ENCODE measurements at regions of chr15 and their contacts with region 1.

Region 1: GRCh38 chr15:66951531-66952320 is 113.7 kb upstream of the SMAD3 start:
- DNase-seq: peak; percentile 38 to 55 (median 52)
- H3K4me3 ChIP-seq: no peak overlapping the region
- H3K4me3 Mint-ChIP-seq: no peak overlapping the region
- H3K27ac ChIP-seq: no peak overlapping the region
- H3K27ac Mint-ChIP-seq: peak overlapping the region in 2 of 7 donors; percentile 4 to 27
- H3K4me1 ChIP-seq: peaks cover 9 to 18% of the 10 kb centered on the region in 2 donors
- H3K4me1 Mint-ChIP-seq: peaks cover 26% of the 10 kb centered on the region
- H3K27me3 ChIP-seq: no peaks in the 10 kb centered on the region
- H3K27me3 Mint-ChIP-seq: peaks cover 0 to 6% (median 0%) of the 10 kb centered on the region in 3 donors
- CTCF ChIP-seq: no peak

Region 2: DNA sequence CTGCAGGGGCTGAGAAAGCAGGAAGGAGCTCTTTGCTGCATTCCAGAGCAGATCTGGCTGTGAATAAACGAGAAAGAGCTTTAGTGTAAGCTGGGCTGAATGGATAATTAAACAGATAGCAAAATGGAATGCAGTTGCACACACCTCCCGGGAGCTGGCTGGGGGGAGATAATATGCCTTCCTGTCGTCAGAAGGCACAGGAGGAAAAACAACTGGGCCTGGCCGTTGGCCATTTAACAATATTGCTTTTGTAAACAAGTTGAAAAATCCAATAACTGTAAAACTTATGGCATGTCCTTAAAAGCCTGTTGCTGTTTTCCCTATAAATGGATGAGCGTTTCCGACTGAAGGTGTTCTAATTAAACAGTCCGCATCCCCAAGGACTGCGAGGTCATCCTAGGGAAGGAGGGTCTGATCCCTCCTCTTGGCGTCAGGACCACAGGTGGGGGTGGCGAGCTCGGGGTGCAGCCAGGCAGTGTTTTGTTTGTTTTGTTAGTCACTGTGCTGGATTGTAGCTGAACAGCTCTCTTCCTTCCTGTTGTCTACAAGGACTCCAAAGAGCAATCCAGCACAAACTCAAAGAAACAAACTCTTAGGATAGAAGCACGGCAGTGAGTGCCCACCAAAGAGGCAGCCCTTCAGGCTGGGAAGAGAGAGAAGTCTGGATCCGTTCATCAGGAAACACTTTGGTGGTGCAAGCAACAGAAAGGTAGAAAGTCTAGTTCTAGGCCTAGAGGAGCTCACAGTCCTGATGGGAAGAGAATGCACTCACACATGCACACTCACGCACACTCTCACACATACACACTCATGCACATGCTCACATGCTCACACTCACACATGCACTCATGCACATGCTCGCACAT is 19.7 kb before region 1 on chr15:
- intact Hi-C with region 1: no loop called
- DNase-seq: no peak
- H3K4me3 ChIP-seq: no peak overlapping the region
- H3K4me3 Mint-ChIP-seq: no peak overlapping the region
- H3K27ac ChIP-seq: no peak overlapping the region
- H3K27ac Mint-ChIP-seq: no peak overlapping the region
- H3K4me1 ChIP-seq: peaks cover 0 to 5% of the 10 kb centered on the region in 2 donors
- H3K4me1 Mint-ChIP-seq: peaks cover 14% of the 10 kb centered on the region
- H3K27me3 ChIP-seq: no peaks in the 10 kb centered on the region
- H3K27me3 Mint-ChIP-seq: peaks cover 0 to 2% (median 0%) of the 10 kb centered on the region in 3 donors
- CTCF ChIP-seq: no peak

Region 3: DNA sequence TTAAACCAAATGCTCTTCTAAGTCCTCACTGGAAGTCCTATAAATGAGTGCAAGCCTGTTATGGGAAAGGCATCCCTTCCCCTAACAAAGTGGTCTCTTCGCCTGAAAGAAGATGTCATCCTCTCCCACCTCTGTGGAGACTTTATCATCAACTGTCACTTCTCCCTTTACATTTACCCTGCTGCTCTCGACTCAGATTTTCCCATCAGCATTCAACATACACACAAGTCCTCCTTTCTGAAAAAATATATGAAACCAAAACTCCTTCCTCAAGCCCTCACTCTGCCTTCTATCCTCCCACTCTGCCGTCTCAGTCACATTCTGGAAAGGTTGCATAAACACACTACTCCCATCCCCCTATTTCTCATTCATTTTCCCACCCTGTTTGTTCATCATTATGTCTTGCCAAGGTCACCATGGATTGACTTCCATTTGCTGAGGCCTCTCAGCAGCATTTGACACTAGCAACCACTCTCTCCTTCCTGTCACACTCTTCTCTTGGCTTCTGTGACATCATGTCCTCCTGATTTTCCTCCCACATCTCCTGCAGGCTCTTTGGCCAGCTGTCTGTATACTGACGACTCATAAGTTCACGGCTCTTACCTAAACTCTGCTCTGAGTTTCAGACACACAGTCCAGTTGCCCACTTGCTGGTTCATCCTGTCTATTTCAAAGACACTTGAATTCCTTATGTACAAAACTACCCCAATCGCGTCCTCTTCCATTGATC is 43.4 kb after region 1 on chr15:
- intact Hi-C with region 1: loop called in 1 of 2 experiments (anchors 5 kb)
- DNase-seq: no peak
- H3K4me3 ChIP-seq: no peak overlapping the region
- H3K4me3 Mint-ChIP-seq: no peak overlapping the region
- H3K27ac ChIP-seq: no peak overlapping the region
- H3K27ac Mint-ChIP-seq: no peak overlapping the region
- H3K4me1 ChIP-seq: peaks cover 0 to 4% of the 10 kb centered on the region in 2 donors
- H3K4me1 Mint-ChIP-seq: peaks cover 13% of the 10 kb centered on the region
- H3K27me3 ChIP-seq: no peaks in the 10 kb centered on the region
- H3K27me3 Mint-ChIP-seq: peaks cover 0 to 4% (median 0%) of the 10 kb centered on the region in 3 donors
- CTCF ChIP-seq: no peak

Region 4: GRCh38 chr15:67024314-67024997 is 72.7 kb after region 1 on chr15:
- intact Hi-C with region 1: no loop called
- DNase-seq: peak; percentile 93 to 95 (median 95)
- H3K4me3 ChIP-seq: peak overlapping the region in 2 of 3 experiments; percentile 11 to 54
- H3K4me3 Mint-ChIP-seq: peak overlapping the region; percentile 47 to 70
- H3K27ac ChIP-seq: peak overlapping the region; percentile 84 to 97
- H3K27ac Mint-ChIP-seq: peak overlapping the region; percentile 94 to 99 (median 99)
- H3K4me1 ChIP-seq: peaks cover 74 to 81% of the 10 kb centered on the region in 2 donors
- H3K4me1 Mint-ChIP-seq: peaks cover 77% of the 10 kb centered on the region
- H3K27me3 ChIP-seq: no peaks in the 10 kb centered on the region
- H3K27me3 Mint-ChIP-seq: peaks cover 0 to 2% (median 0%) of the 10 kb centered on the region in 3 donors
- CTCF ChIP-seq: no peak

Region 5: DNA sequence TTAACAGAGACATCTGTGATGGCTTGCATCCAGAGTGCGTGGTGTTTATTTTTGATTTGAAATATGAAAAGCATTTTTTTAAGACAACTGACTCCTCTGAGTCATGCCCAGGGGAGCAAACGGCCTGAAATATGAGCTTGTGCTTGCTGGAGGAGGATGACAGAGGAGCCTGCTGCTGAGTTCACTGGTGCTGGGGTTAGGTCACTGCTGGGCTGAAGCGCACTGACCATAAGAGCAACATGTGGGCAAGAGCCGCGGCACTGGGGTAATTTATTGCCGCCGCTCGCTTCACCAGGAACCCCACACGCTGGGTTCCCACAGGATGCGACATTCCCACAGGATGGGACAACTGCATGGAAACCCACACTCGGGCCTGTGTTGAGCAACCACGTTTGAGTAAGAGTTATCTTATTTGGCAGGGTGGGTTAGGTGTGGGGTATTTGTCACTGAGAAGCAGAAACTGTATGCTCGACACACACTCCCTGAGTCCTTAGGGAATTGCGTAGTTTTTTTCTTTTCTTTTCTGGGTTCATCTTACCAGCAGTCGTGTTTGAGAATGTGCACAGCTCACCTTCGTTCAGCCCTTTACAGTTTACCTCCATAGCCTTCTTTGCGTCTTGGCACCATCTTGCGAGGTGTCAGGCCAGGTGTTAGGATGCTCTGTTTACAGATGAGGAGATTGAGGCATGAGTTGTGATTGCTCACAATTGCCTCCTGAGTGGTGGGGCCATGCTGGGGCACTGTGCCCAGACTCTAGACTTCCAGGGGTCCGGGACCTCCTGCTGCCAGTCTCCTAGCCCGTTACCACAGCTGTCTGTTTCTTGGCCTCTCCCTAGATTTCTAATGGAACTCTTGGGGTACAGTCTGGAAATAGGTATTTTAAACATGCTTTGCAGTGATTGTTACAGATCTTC is 174.1 kb after region 1 on chr15:
- intact Hi-C with region 1: no loop called
- DNase-seq: peak in 1 of 3 donors; percentile 59
- H3K4me3 ChIP-seq: no peak overlapping the region
- H3K4me3 Mint-ChIP-seq: no peak overlapping the region
- H3K27ac ChIP-seq: peak overlapping the region in 1 of 2 donors; percentile 27
- H3K27ac Mint-ChIP-seq: peak overlapping the region in 5 of 7 donors; percentile 72 to 97 (median 81)
- H3K4me1 ChIP-seq: peaks cover 31 to 43% of the 10 kb centered on the region in 2 donors
- H3K4me1 Mint-ChIP-seq: peaks cover 63% of the 10 kb centered on the region
- H3K27me3 ChIP-seq: no peaks in the 10 kb centered on the region
- H3K27me3 Mint-ChIP-seq: peaks cover 0 to 3% (median 0%) of the 10 kb centered on the region in 3 donors
- CTCF ChIP-seq: no peak

Measured in CD14-positive monocyte (primary cell).